Naive thymus-derived CD4-positive, alpha-beta T cell (primary cell): ENCODE measurements at regions of chr16 and their contacts with region 1.

Region 1: DNA sequence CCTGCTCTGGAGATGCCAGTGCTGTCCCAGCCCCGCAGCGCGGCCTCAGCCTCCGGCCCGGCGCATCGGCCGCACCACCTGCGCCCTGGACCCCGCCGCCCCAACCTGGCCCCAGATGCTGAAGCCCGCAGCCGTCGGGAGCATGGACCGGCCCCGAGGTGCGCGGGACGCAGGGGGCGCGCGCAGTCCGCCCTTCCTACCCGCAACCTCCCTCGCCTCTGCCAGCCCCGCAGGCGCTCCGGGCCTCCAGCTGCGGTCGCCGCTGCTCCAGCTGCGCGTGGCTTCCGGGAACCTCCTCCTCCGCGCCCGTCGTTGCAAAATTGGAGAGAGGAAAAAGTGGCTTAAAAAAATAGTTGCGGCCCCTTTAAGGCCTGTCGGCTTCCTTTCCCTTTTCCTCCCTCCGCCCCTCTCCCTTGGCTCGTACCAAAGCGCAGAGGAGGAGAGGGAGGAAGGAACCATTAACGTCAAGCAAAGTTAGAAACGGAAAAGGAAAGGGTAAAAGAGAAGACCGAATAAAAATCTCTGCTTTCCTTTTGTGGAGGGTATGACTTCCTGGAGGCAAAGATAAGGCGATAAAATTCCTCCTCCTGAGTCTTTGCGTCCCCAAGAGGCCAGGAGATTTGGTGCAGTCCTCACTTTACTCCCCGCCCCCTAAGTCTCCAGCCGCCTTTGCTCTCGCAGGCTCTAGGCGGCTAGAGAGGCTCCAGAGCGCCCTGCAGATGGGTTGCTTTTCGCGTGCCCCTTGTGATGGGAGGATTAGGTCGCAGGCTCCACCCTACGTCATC is at the start of gene CDIPT:
- DNase-seq: peak; percentile 76 to 97 (median 93)
- ATAC-seq: peak; percentile 99
- H3K4me3 ChIP-seq: peak within 1 kb of the TSS; percentile 66
- H3K4me3 Mint-ChIP-seq: peak within 1 kb of the TSS; percentile 83 to 100 (median 96)
- H3K27ac ChIP-seq: peak within 1 kb of the TSS; percentile 90
- H3K27ac Mint-ChIP-seq: peak within 1 kb of the TSS; percentile 93 to 100 (median 99)
- H3K4me1 ChIP-seq: peaks cover 13 to 17% of the 10 kb centered on the region in 2 donors
- H3K4me1 Mint-ChIP-seq: peaks cover 12 to 35% (median 26%) of the 10 kb centered on the region in 7 donors
- H3K27me3 ChIP-seq: no peaks in the 10 kb centered on the region
- H3K27me3 Mint-ChIP-seq: peaks cover 0 to 3% (median 0%) of the 10 kb centered on the region in 5 donors
- total RNA-seq, gene CDIPT: 36.5 to 92.0 (median 69.9) TPM

Region 2: GRCh38 chr16:29678691-29679267 is 184.3 kb before region 1 on chr16 and contains the start of gene QPRT:
- CTCF ChIA-PET with region 1: no interaction called
- POLR2A ChIA-PET with region 1: no interaction called
- intact Hi-C with region 1: no loop called
- DNase-seq: no peak
- ATAC-seq: no peak
- H3K4me3 ChIP-seq: peak within 1 kb of the TSS; percentile 27
- H3K4me3 Mint-ChIP-seq: peak within 1 kb of the TSS; percentile 59 to 80 (median 69)
- H3K27ac ChIP-seq: peak within 1 kb of the TSS; percentile 59
- H3K27ac Mint-ChIP-seq: peak within 1 kb of the TSS; percentile 64 to 95 (median 84)
- H3K4me1 ChIP-seq: peaks cover 0 to 12% of the 10 kb centered on the region in 2 donors
- H3K4me1 Mint-ChIP-seq: peaks cover 10 to 30% (median 21%) of the 10 kb centered on the region in 7 donors
- H3K27me3 ChIP-seq: no peaks in the 10 kb centered on the region
- H3K27me3 Mint-ChIP-seq: no peaks in the 10 kb centered on the region
- total RNA-seq, gene QPRT: 0.57 to 6.5 (median 1.4) TPM

Region 3: DNA sequence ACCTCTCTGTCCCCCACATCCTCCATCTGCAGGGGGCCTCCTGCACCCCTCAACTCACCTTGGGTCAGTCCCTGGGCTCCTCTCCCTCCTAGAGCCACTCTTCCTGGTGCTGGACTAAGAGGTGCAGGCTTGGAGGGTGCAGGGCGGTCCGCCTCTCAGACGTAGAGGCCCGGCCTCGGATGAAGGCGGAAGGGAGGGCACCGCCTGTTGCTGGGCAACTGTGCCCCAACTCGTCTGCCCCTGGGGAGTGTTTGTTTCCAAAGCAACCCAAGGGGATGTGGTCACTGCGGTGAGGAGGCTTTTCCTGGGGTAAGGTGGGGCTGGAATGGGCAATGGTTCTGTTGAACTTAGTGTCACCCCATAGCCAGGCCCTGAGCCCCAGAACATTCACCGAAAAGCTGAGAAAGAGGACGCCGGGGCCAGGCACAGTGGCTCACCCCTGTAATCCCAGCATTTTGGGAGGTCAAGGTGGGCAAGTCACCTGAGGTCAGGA is 117.2 kb before region 1 on chr16 and contains the start of gene C16orf54:
- CTCF ChIA-PET with region 1: no interaction called
- POLR2A ChIA-PET with region 1: interaction called, 3 read pairs
- intact Hi-C with region 1: loop called in 1 of 2 experiments (anchors 1 kb)
- DNase-seq: peak; percentile 80 to 99 (median 98)
- ATAC-seq: peak; percentile 91
- H3K4me3 ChIP-seq: peak within 1 kb of the TSS; percentile 76
- H3K4me3 Mint-ChIP-seq: peak within 1 kb of the TSS; percentile 96 to 100 (median 99)
- H3K27ac ChIP-seq: peak within 1 kb of the TSS; percentile 99
- H3K27ac Mint-ChIP-seq: peak within 1 kb of the TSS; percentile 95 to 100 (median 99)
- H3K4me1 ChIP-seq: peaks cover 45 to 50% of the 10 kb centered on the region in 2 donors
- H3K4me1 Mint-ChIP-seq: peaks cover 42 to 71% (median 62%) of the 10 kb centered on the region in 7 donors
- H3K27me3 ChIP-seq: no peaks in the 10 kb centered on the region
- H3K27me3 Mint-ChIP-seq: peaks cover 0 to 3% (median 0%) of the 10 kb centered on the region in 5 donors
- total RNA-seq, gene C16orf54: 63.9 to 228 (median 151) TPM

Region 4: GRCh38 chr16:29784157-29784556 is 78.9 kb before region 1 on chr16:
- CTCF ChIA-PET with region 1: no interaction called
- POLR2A ChIA-PET with region 1: no interaction called
- intact Hi-C with region 1: no loop called
- DNase-seq: peak in 6 of 9 donors; percentile 27 to 56 (median 46)
- ATAC-seq: peak; percentile 65
- H3K4me3 ChIP-seq: no peak overlapping the region
- H3K4me3 Mint-ChIP-seq: peak overlapping the region in 4 of 10 donors; percentile 4 to 41 (median 17)
- H3K27ac ChIP-seq: peak overlapping the region; percentile 44
- H3K27ac Mint-ChIP-seq: peak overlapping the region in 8 of 9 donors; percentile 33 to 95 (median 70)
- H3K4me1 ChIP-seq: peaks cover 8 to 9% of the 10 kb centered on the region in 2 donors
- H3K4me1 Mint-ChIP-seq: peaks cover 12 to 40% (median 26%) of the 10 kb centered on the region in 7 donors
- H3K27me3 ChIP-seq: no peaks in the 10 kb centered on the region
- H3K27me3 Mint-ChIP-seq: peaks cover 0 to 9% (median 0%) of the 10 kb centered on the region in 5 donors

Region 5: DNA sequence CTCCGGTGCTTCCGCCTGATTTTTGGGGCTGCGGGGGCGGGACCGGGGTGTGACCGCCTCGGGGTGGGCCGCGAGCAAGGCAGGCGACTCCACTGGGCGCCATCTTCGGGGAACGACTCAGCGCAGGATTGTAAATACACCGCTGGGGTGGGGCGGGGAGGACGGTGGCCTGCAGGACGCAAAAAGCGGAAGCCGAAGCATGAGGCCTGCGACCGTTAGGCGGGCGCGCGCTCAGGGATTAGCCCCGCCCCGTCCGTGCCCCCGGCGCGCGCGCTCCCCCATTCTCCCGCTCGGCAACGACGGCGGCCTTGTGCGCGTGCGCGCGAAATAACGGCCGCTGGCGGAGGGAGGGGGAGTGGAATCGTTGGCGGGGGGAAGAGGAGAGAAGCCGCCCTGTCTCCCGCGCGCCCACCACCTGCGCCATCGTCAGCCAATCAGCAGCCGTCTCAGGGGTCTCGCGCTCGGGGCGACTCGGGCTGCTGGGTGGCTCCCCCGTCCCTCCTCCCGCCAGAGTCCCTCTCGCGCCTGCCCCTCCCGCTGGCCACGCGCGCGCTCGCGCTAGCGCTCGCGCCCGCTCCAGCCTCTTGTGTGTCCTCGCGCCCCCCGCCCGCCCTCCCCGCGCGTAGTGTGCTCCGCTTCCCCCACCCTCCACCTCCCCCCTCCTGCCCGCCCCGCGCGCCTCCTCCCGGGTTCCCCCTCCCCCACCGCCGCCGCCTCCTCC is 57.5 kb before region 1 on chr16:
- CTCF ChIA-PET with region 1: interaction called, 5 read pairs
- POLR2A ChIA-PET with region 1: interaction called, 11 read pairs
- intact Hi-C with region 1: loop called (anchors 1 kb)
- DNase-seq: peak; percentile 96 to 98 (median 98)
- ATAC-seq: peak; percentile 86
- H3K4me3 ChIP-seq: peak overlapping the region; percentile 87
- H3K4me3 Mint-ChIP-seq: peak overlapping the region; percentile 88 to 100 (median 98)
- H3K27ac ChIP-seq: peak overlapping the region; percentile 95
- H3K27ac Mint-ChIP-seq: peak overlapping the region; percentile 95 to 100 (median 99)
- H3K4me1 ChIP-seq: peaks cover 34 to 39% of the 10 kb centered on the region in 2 donors
- H3K4me1 Mint-ChIP-seq: peaks cover 28 to 49% (median 41%) of the 10 kb centered on the region in 7 donors
- H3K27me3 ChIP-seq: no peaks in the 10 kb centered on the region
- H3K27me3 Mint-ChIP-seq: peaks cover 0 to 2% (median 0%) of the 10 kb centered on the region in 5 donors

Region 6: GRCh38 chr16:29900102-29900887 is 37.2 kb after region 1 on chr16 and contains the start of gene ASPHD1:
- CTCF ChIA-PET with region 1: no interaction called
- POLR2A ChIA-PET with region 1: no interaction called
- intact Hi-C with region 1: loop called (anchors 1 to 5 kb)
- DNase-seq: peak; percentile 68 to 91 (median 79)
- ATAC-seq: peak; percentile 93
- H3K4me3 ChIP-seq: peak within 1 kb of the TSS; percentile 53
- H3K4me3 Mint-ChIP-seq: peak within 1 kb of the TSS; percentile 53 to 86 (median 72)
- H3K27ac ChIP-seq: no peak within 1 kb of the TSS
- H3K27ac Mint-ChIP-seq: no peak within 1 kb of the TSS
- H3K4me1 ChIP-seq: peaks cover 5% of the 10 kb centered on the region in 2 donors
- H3K4me1 Mint-ChIP-seq: peaks cover 4 to 19% (median 11%) of the 10 kb centered on the region in 7 donors
- H3K27me3 ChIP-seq: peaks cover 5 to 13% of the 10 kb centered on the region in 2 donors
- H3K27me3 Mint-ChIP-seq: peaks cover 16 to 35% (median 26%) of the 10 kb centered on the region in 5 donors
- total RNA-seq, gene ASPHD1: 0.27 TPM in 1 of 5 experiments, not detected in the others

Region 7: GRCh38 chr16:29961479-29962343 is 98.6 kb after region 1 on chr16 and contains the start of gene TMEM219:
- CTCF ChIA-PET with region 1: no interaction called
- POLR2A ChIA-PET with region 1: interaction called, 6 read pairs
- intact Hi-C with region 1: loop called in 1 of 2 experiments (anchors 1 kb)
- DNase-seq: peak; percentile 90 to 99 (median 96)
- ATAC-seq: peak; percentile 94
- H3K4me3 ChIP-seq: peak within 1 kb of the TSS; percentile 91
- H3K4me3 Mint-ChIP-seq: peak within 1 kb of the TSS; percentile 88 to 94 (median 92)
- H3K27ac ChIP-seq: peak within 1 kb of the TSS; percentile 85
- H3K27ac Mint-ChIP-seq: peak within 1 kb of the TSS; percentile 88 to 97 (median 95)
- H3K4me1 ChIP-seq: peaks cover 10 to 17% of the 10 kb centered on the region in 2 donors
- H3K4me1 Mint-ChIP-seq: peaks cover 8 to 31% (median 23%) of the 10 kb centered on the region in 7 donors
- H3K27me3 ChIP-seq: no peaks in the 10 kb centered on the region
- H3K27me3 Mint-ChIP-seq: no peaks in the 10 kb centered on the region
- total RNA-seq, gene TMEM219: 64.3 to 89.7 (median 74.0) TPM

Region 8: GRCh38 chr16:29995911-29996772 is 133.1 kb after region 1 on chr16 and contains the start of gene INO80E:
- CTCF ChIA-PET with region 1: interaction called, 6 read pairs
- POLR2A ChIA-PET with region 1: interaction called, 4 read pairs
- intact Hi-C with region 1: loop called (anchors 1 kb)
- DNase-seq: peak; percentile 94 to 99 (median 98)
- ATAC-seq: peak; percentile 99
- H3K4me3 ChIP-seq: peak within 1 kb of the TSS; percentile 100
- H3K4me3 Mint-ChIP-seq: peak within 1 kb of the TSS; percentile 86 to 99 (median 98)
- H3K27ac ChIP-seq: peak within 1 kb of the TSS; percentile 99
- H3K27ac Mint-ChIP-seq: peak within 1 kb of the TSS; percentile 93 to 99 (median 97)
- H3K4me1 ChIP-seq: peaks cover 16 to 18% of the 10 kb centered on the region in 2 donors
- H3K4me1 Mint-ChIP-seq: peaks cover 24 to 53% (median 38%) of the 10 kb centered on the region in 7 donors
- H3K27me3 ChIP-seq: no peaks in the 10 kb centered on the region
- H3K27me3 Mint-ChIP-seq: no peaks in the 10 kb centered on the region
- total RNA-seq, gene INO80E: 71.7 to 141 (median 95.8) TPM

Region 9: DNA sequence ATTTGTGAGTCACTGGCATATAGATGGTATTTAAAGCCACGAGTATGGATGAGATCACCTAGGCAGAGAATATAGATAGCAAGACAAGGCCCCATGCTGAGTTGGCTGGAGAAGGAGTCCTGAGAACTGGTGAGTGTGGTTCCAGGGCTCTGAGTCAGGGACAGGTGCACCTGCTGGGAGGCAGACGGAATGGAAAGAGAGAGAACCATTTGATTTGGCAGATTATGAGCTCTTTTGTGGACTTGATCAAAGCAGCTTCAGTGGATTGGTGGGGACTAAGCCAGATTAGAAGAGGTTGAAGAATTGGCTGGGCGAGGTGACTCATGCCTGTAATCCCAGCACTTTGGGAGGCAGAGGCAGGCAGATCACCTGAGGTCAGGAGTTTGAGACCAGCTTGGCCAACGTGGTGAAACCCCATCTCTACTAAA is 155.7 kb after region 1 on chr16:
- CTCF ChIA-PET with region 1: interaction called, 3 read pairs
- POLR2A ChIA-PET with region 1: no interaction called
- intact Hi-C with region 1: loop called in 1 of 2 experiments (anchors 1 kb)
- DNase-seq: no peak
- ATAC-seq: no peak
- H3K4me3 ChIP-seq: no peak overlapping the region
- H3K4me3 Mint-ChIP-seq: peak overlapping the region in 1 of 10 donors; percentile 0
- H3K27ac ChIP-seq: no peak overlapping the region
- H3K27ac Mint-ChIP-seq: no peak overlapping the region
- H3K4me1 ChIP-seq: peaks cover 8% of the 10 kb centered on the region in 2 donors
- H3K4me1 Mint-ChIP-seq: peaks cover 5 to 17% (median 10%) of the 10 kb centered on the region in 7 donors
- H3K27me3 ChIP-seq: no peaks in the 10 kb centered on the region
- H3K27me3 Mint-ChIP-seq: peaks cover 0 to 29% (median 0%) of the 10 kb centered on the region in 5 donors